ENCODE measurements at regions of chr9 and their contacts with region 1.

Region 1: DNA sequence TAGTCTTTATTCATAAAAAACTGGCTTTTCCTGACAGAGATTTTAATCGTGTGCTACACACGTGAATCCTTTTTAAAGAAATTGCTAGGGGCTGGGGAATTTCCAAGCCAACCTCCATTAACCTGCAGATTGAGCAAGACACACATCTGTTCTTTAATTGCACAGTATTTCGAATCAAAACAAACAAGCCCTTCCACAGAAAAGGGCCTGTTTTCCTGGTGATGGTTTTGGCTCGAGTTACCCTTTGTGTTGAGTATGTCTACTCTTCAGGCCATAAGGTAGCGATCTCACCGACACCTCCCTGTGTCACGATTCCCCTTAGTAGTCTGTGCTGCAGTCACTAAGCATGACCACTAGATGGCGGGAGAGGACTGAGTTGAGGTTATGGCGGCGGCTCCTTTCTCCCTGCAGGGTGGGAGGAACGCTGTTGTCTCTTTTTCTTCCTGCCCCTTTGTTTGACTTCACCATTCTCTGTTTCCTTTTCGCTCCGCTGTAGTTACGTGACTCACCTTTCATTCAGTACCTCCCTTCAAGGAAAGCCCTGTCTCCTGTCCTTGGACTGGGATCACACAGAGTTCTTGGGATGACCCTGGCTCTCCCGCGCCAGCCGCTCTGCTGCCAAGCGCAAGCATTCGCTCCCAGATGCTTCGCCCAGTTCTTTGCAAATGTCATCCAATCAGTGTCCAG is 137.1 kb upstream of the SLC24A2 start:
- DNase-seq: peak; percentile 69
- H3K4me3 ChIP-seq: peak overlapping the region in 3 of 4 donors; percentile 10 to 42 (median 29)
- H3K27ac ChIP-seq: no peak overlapping the region
- H3K4me1 ChIP-seq: peaks cover 0 to 10% (median 3%) of the 10 kb centered on the region in 4 donors
- H3K27me3 ChIP-seq: peaks cover 6% of the 10 kb centered on the region
- CTCF ChIP-seq: peak; percentile 94 to 98 (median 95)
- EP300 ChIP-seq: no peak
- POLR2A ChIP-seq: no peak

Region 2: GRCh38 chr9:18658764-18659705 is 1266.9 kb before region 1 on chr9:
- in situ Hi-C with region 1: no loop called
- intact Hi-C with region 1: no loop called
- DNase-seq: no peak
- H3K4me3 ChIP-seq: no peak overlapping the region
- H3K27ac ChIP-seq: no peak overlapping the region
- H3K4me1 ChIP-seq: no peaks in the 10 kb centered on the region
- H3K27me3 ChIP-seq: no peaks in the 10 kb centered on the region
- CTCF ChIP-seq: no peak
- EP300 ChIP-seq: no peak
- POLR2A ChIP-seq: no peak

Region 3: GRCh38 chr9:19517202-19517942 is 408.6 kb before region 1 on chr9:
- in situ Hi-C with region 1: loop called in 1 of 4 experiments (anchors 25 kb)
- intact Hi-C with region 1: no loop called
- DNase-seq: no peak
- H3K4me3 ChIP-seq: no peak overlapping the region
- H3K27ac ChIP-seq: no peak overlapping the region
- H3K4me1 ChIP-seq: no peaks in the 10 kb centered on the region
- H3K27me3 ChIP-seq: no peaks in the 10 kb centered on the region
- CTCF ChIP-seq: peak in 2 of 5 experiments; percentile 6 to 10
- EP300 ChIP-seq: no peak
- POLR2A ChIP-seq: no peak

Region 4: DNA sequence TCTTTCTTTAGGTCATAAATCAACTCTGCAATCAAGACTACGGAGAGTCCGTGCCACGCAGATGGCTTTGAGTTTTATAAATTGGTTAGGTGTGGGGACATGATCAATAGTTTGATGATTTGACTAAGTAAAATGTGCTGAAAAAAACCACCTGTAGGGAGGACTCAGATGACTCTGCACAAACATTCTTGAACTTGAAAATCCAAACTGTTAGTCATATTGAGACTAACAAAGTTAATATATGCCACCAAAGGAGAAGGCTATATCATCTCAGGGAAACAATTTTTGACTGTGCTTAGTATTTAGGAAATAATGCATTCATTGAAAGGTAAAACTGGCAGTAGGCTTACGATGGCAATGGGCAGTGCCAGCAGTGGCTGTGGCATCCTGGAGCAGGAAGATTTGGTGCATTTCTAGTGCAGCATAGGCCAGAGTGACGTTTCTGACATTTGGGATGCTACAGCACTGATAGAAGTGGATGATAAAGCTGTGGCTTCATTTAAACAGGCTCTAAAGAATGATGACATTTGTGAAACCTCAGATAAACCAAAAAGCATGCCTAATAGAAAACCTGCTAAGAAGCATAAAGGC is 405.2 kb after region 1 on chr9:
- in situ Hi-C with region 1: loop called in 1 of 4 experiments (anchors 25 kb)
- intact Hi-C with region 1: no loop called
- DNase-seq: no peak
- H3K4me3 ChIP-seq: no peak overlapping the region
- H3K27ac ChIP-seq: no peak overlapping the region
- H3K4me1 ChIP-seq: no peaks in the 10 kb centered on the region
- H3K27me3 ChIP-seq: no peaks in the 10 kb centered on the region
- CTCF ChIP-seq: no peak
- EP300 ChIP-seq: no peak
- POLR2A ChIP-seq: no peak

Region 5: DNA sequence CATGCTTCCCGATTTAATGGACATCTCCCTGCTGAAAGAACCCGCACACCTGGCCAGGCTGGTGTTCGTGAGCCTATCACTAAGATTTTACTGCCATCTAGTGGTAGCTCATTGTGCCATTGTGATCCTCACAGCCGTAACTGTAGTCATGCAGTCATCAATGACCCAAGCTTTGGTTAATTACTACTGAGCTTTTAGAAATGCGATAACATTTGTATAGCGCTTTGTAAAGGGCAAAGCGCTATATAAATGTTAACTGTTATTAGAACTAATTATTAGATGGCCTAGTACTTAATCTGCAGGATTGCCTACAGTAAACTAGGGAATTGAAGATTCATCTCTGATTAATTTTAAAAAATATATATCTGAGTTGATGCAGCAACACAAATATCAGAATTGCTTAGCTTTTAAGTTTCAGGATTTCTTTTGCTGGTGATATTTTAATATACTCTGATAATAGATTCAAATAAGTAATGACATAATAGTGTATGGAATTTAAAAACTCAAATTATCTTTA is 1015.3 kb after region 1 on chr9:
- in situ Hi-C with region 1: loop called (anchors 5 to 25 kb)
- intact Hi-C with region 1: loop called (anchors 5 kb)
- DNase-seq: peak; percentile 50
- H3K4me3 ChIP-seq: no peak overlapping the region
- H3K27ac ChIP-seq: no peak overlapping the region
- H3K4me1 ChIP-seq: peaks cover 0 to 3% (median 0%) of the 10 kb centered on the region in 4 donors
- H3K27me3 ChIP-seq: no peaks in the 10 kb centered on the region
- CTCF ChIP-seq: peak; percentile 72 to 83 (median 79)
- EP300 ChIP-seq: no peak
- POLR2A ChIP-seq: no peak

Region 6: GRCh38 chr9:21110708-21111576 is 1185.0 kb after region 1 on chr9:
- in situ Hi-C with region 1: loop called (anchors 10 to 25 kb)
- intact Hi-C with region 1: loop called (anchors 5 kb)
- DNase-seq: no peak
- H3K4me3 ChIP-seq: no peak overlapping the region
- H3K27ac ChIP-seq: no peak overlapping the region
- H3K4me1 ChIP-seq: no peaks in the 10 kb centered on the region
- H3K27me3 ChIP-seq: no peaks in the 10 kb centered on the region
- CTCF ChIP-seq: peak; percentile 65 to 81 (median 76)
- EP300 ChIP-seq: no peak
- POLR2A ChIP-seq: no peak

Measured in transverse colon (tissue), 4 donors.